H1 (cell line): ENCODE measurements at regions of chr17 and their contacts with region 1.

Region 1: DNA sequence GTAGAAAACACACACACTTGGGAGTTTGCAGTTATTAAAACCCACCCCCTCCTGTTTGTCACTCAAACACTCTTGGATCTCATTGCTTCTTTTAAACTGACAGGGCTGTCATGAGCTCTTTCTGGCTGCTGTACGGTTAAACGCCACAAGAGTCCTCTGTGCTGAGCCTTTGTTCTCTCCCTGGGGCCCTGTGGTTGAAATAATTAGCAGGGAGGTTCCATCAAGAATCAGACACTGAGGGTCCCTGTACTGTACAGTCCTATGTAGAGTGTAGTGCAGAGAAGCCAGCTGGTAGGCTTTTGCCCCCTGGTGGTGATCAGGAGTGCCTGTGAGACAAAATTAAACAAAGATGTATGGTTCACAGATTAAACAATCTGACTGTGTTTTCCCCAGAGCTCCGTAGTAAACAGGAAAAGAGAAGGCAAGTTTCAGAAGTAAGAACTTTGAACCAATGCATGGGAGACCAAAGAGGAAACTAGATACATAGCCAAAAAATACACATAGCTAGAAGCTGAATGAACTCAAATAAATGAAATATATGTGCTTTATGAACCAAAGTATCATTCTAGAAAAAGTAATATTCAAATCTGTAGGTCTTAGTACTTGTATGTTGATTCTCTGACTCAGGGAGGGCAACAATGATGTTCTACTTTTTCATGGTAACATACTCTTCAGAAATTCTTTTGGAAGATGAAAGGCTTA is 1.4 kb upstream of the SSH2 start:
- DNase-seq: peak in 1 of 2 experiments; percentile 53
- H3K4me3 ChIP-seq: peak overlapping the region; percentile 84 to 96 (median 86); a peak in 5 of 8 replicates
- H3K27ac ChIP-seq: no peak overlapping the region
- H3K4me1 ChIP-seq: peaks cover 0 to 9% (median 2%) of the 10 kb centered on the region in 4 experiments; a peak in 4 of 7 replicates
- H3K27me3 ChIP-seq: peaks cover 0 to 3% (median under 1%) of the 10 kb centered on the region in 4 experiments; a peak in 2 of 7 replicates
- CTCF ChIP-seq: peak; percentile 47 to 82 (median 80)
- EP300 ChIP-seq: no peak
- POLR2A ChIP-seq: no peak
- RAD21 ChIP-seq: peak; percentile 66 to 76

Region 2: GRCh38 chr17:29622337-29623282 is 308.8 kb before region 1 on chr17 and contains the start of gene CORO6:
- CTCF ChIA-PET with region 1: interaction called, 11 read pairs
- POLR2A ChIA-PET with region 1: interaction called, 4 read pairs
- DNase-seq: peak in 1 of 2 experiments; percentile 94
- H3K4me3 ChIP-seq: peak within 1 kb of the TSS; percentile 53 to 84 (median 69)
- H3K27ac ChIP-seq: peak within 1 kb of the TSS; percentile 72
- H3K4me1 ChIP-seq: peaks cover 11 to 24% (median 16%) of the 10 kb centered on the region in 4 experiments
- H3K27me3 ChIP-seq: peaks cover 5 to 42% (median 29%) of the 10 kb centered on the region in 4 experiments
- CTCF ChIP-seq: no peak
- EP300 ChIP-seq: no peak
- POLR2A ChIP-seq: peak in 1 of 2 experiments; percentile 83; a peak in 2 of 3 replicates
- RAD21 ChIP-seq: no peak
- total RNA-seq, gene CORO6: 2.1 and 2.5 TPM in 2 replicates

Region 3: GRCh38 chr17:29807520-29808351 is 123.6 kb before region 1 on chr17:
- CTCF ChIA-PET with region 1: interaction called, 170 read pairs
- POLR2A ChIA-PET with region 1: interaction called, 3 read pairs
- DNase-seq: peak in 1 of 2 experiments; percentile 72
- H3K4me3 ChIP-seq: no peak overlapping the region
- H3K27ac ChIP-seq: no peak overlapping the region
- H3K4me1 ChIP-seq: no peaks in the 10 kb centered on the region
- H3K27me3 ChIP-seq: no peaks in the 10 kb centered on the region
- CTCF ChIP-seq: peak in 2 of 3 experiments; percentile 64 to 72; a peak in 3 of 4 replicates
- EP300 ChIP-seq: no peak
- POLR2A ChIP-seq: no peak
- RAD21 ChIP-seq: peak; percentile 84 to 85

Region 4: GRCh38 chr17:29909236-29910003 is 22.0 kb before region 1 on chr17:
- CTCF ChIA-PET with region 1: interaction called, 16 read pairs
- POLR2A ChIA-PET with region 1: no interaction called
- DNase-seq: no peak
- H3K4me3 ChIP-seq: no peak overlapping the region
- H3K27ac ChIP-seq: no peak overlapping the region
- H3K4me1 ChIP-seq: no peaks in the 10 kb centered on the region
- H3K27me3 ChIP-seq: no peaks in the 10 kb centered on the region
- CTCF ChIP-seq: no peak
- EP300 ChIP-seq: no peak
- POLR2A ChIP-seq: no peak
- RAD21 ChIP-seq: no peak

Region 5: GRCh38 chr17:30021708-30022317 is 90.4 kb after region 1 on chr17:
- CTCF ChIA-PET with region 1: interaction called, 21 read pairs
- POLR2A ChIA-PET with region 1: no interaction called
- DNase-seq: no peak
- H3K4me3 ChIP-seq: no peak overlapping the region
- H3K27ac ChIP-seq: no peak overlapping the region
- H3K4me1 ChIP-seq: no peaks in the 10 kb centered on the region
- H3K27me3 ChIP-seq: no peaks in the 10 kb centered on the region
- CTCF ChIP-seq: peak in 2 of 3 experiments; percentile 53 to 72; a peak in 2 of 4 replicates
- EP300 ChIP-seq: no peak
- POLR2A ChIP-seq: no peak
- RAD21 ChIP-seq: peak; percentile 67 to 70